Heart right ventricle (tissue), 16 donors: ENCODE measurements at regions of chr1 and their contacts with region 1.

Region 1: GRCh38 chr1:53889304-53890298 is at the start of gene YIPF1:
- DNase-seq: peak; percentile 90
- ATAC-seq: peak; percentile 98 to 100 (median 99)
- H3K4me3 ChIP-seq: peak within 1 kb of the TSS; percentile 60 to 100 (median 82)
- H3K27ac ChIP-seq: peak within 1 kb of the TSS in 9 of 10 donors; percentile 49 to 92 (median 77)
- H3K4me1 ChIP-seq: peaks cover 0 to 36% (median 13%) of the 10 kb centered on the region in 9 donors
- H3K27me3 ChIP-seq: no peaks in the 10 kb centered on the region
- CTCF ChIP-seq: no peak
- total RNA-seq, gene YIPF1: 10.2 to 20.1 (median 13.2) TPM

Region 2: DNA sequence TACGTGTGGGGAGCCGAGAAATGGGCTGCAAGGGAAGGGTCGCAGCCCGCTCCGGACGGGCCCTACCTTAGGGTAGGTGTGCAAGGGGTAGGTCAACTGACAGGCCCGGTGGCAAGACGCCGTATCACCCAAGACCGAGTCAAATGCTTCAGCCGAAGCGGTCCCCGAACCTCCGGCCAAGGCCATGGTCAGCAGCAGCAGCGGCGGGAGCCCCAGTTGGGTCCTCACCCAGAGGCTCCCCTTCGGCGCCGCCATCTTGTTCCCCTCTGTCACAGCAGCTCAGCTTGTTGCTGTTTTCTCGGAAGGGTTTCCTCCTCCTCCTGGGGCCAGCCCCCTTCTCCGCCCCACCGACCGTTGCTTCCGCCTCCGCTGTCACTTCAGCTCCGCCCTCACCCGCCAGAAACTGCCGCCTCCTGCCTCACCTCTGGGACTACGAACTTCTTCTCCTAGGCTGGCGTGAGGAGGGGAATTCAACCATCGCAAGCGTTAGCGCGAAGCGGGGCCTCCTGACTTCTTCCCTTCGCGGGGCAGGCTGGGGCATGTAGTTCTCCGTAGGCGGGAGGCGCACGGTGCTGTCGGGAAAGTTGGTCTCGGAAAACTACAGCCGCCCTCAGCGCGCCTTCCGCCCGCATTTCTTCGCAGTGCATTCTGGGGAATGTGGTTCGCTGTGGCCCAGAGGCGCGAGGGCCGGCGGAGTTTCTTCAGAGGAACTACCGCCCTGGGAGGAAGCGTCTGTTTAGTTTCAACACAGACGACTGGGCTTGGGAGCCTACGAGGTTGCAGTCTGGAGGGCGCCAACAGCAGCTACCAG is 163.5 kb after region 1 on chr1 and contains the starts of genes TCEANC2 and TMEM59:
- intact Hi-C with region 1: loop called in 1 of 10 experiments (anchors 5 kb)
- DNase-seq: peak; percentile 96 to 98
- ATAC-seq: peak; percentile 96 to 98 (median 97)
- H3K4me3 ChIP-seq: peak within 1 kb of the TSS; percentile 78 to 93 (median 85)
- H3K27ac ChIP-seq: peak within 1 kb of the TSS; percentile 81 to 98 (median 95)
- H3K4me1 ChIP-seq: peaks cover 9 to 56% (median 49%) of the 10 kb centered on the region in 9 donors
- H3K27me3 ChIP-seq: no peaks in the 10 kb centered on the region
- CTCF ChIP-seq: no peak
- total RNA-seq, gene TCEANC2: 2.3 to 5.9 (median 4.1) TPM
- total RNA-seq, gene TMEM59: 285 to 474 (median 345) TPM